ENCODE measurements at regions of chr7 and their contacts with region 1.

Region 1: GRCh38 chr7:130929896-130930659 is 196.1 kb upstream of the KLF14 start:
- DNase-seq: no peak
- H3K4me3 ChIP-seq: no peak overlapping the region
- H3K27ac ChIP-seq: no peak overlapping the region
- H3K4me1 ChIP-seq: peaks cover 6% of the 10 kb centered on the region
- CTCF ChIP-seq: no peak

Region 2: DNA sequence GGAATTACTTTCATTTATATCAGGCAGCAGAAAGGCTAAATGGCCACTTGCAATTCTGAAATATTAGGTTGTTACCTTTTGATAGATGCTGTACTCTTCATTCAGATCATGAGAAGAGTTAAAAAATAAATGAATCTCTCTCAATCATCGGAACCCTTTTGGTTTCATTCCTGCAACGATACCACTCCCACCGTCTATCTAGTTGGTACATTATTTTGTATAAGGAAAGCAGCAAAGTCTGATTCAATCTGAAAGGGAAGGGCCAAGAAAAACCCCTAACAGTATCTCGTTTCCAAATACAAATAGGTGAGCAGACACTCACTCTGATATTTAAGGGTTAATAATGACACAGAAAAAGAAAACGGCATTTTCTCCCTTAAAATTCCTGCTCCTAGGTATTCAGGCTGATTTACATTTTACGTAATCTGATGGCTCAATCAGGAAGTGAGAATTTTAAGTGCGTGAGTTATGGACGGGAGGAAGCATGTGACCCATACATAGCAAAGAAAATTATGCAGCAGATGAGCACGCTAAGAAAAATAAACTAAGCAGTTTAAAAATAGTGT is 13.3 kb after region 1 on chr7:
- CTCF ChIA-PET with region 1: no interaction called
- POLR2A ChIA-PET with region 1: interaction called, 11 read pairs
- intact Hi-C with region 1: no loop called
- DNase-seq: peak; percentile 35
- H3K4me3 ChIP-seq: peak overlapping the region; percentile 66
- H3K27ac ChIP-seq: peak overlapping the region; percentile 47
- H3K4me1 ChIP-seq: peaks cover 58% of the 10 kb centered on the region
- CTCF ChIP-seq: no peak